ENCODE measurements at regions of chr3 and their contacts with region 1.

Region 1: DNA sequence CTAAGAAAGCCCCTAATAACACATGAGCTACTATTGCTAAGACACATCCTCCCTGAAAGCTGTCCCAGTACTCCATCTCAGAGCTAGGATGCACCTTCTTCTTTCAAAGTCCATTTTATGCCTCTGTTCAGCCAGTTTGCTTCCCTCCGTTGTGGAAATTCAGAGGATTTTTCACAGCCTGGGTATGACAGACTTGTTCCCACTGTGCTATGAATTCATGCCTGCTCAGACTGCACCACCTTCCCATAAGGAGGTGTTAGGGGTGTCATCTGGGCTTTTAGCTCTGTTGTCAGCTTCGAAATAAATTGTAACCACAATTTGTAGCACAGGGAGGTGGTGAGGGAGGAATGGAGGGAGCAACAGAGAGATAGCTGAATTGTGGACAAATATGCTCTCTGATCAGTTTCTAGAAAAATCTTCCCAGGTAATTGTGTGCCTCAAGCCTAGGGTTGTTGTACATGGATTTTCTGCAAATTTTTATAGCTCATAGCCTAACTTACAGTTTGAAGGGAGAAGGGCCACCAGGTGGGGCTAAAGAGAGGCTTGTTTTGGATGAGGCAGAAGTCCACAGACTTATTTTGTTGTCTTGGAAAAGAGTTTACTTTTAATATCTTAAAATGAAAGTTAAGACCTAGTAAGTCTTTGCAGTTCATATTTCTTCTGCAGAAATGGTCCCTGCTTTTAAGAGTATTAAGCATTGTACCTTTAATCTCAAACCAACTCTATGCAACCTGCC is 462.0 kb downstream of the PDCD6IP start:
- DNase-seq: peak; percentile 75
- ATAC-seq: no peak
- H3K4me3 Mint-ChIP-seq: no peak overlapping the region
- H3K27ac Mint-ChIP-seq: no peak overlapping the region
- H3K4me1 Mint-ChIP-seq: peaks cover 16% of the 10 kb centered on the region
- H3K27me3 Mint-ChIP-seq: no peaks in the 10 kb centered on the region
- CTCF ChIP-seq: no peak

Region 2: DNA sequence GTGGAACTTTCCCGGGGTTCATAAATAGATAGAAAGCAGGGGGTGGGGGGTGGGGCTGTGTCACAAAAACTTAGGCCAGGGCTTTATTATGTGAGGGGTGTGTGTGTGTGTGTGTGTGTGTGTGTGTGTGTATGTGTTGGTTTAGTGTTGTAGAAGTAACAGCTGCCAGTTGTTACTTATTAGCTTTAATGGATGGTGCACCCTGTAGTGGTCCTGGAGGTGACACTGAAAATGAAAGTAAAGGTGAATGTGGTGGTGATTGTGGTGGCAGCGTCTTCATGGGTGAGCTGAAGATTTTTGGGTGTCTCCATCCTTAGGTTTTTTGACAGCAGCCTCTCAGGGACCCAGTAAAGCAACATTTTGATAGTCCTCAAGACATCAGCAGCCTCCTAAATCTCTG is 12.1 kb before region 1 on chr3:
- CTCF ChIA-PET with region 1: interaction called, 30 read pairs
- POLR2A ChIA-PET with region 1: interaction called, 3 read pairs
- intact Hi-C with region 1: no loop called
- DNase-seq: peak; percentile 11
- ATAC-seq: no peak
- H3K4me3 Mint-ChIP-seq: no peak overlapping the region
- H3K27ac Mint-ChIP-seq: no peak overlapping the region
- H3K4me1 Mint-ChIP-seq: peaks cover 10% of the 10 kb centered on the region
- H3K27me3 Mint-ChIP-seq: no peaks in the 10 kb centered on the region
- CTCF ChIP-seq: no peak

Measured in activated CD8-positive, alpha-beta T cell treated with anti-CD3 and anti-CD28 coated beads for 36 hours (primary cell).